ENCODE measurements at regions of chr7 and their contacts with region 1.

Region 1: GRCh38 chr7:106542550-106543220 is 118.3 kb downstream of the CCDC71L start:
- DNase-seq: peak; percentile 33
- H3K4me3 Mint-ChIP-seq: no peak overlapping the region
- H3K27ac Mint-ChIP-seq: no peak overlapping the region
- H3K4me1 Mint-ChIP-seq: peaks cover 16% of the 10 kb centered on the region
- H3K27me3 Mint-ChIP-seq: no peaks in the 10 kb centered on the region

Region 2: GRCh38 chr7:106561666-106562411 is 19.2 kb after region 1 on chr7:
- intact Hi-C with region 1: no loop called
- DNase-seq: no peak
- H3K4me3 Mint-ChIP-seq: no peak overlapping the region
- H3K27ac Mint-ChIP-seq: no peak overlapping the region
- H3K4me1 Mint-ChIP-seq: peaks cover 5% of the 10 kb centered on the region
- H3K27me3 Mint-ChIP-seq: peaks cover 9% of the 10 kb centered on the region

Region 3: DNA sequence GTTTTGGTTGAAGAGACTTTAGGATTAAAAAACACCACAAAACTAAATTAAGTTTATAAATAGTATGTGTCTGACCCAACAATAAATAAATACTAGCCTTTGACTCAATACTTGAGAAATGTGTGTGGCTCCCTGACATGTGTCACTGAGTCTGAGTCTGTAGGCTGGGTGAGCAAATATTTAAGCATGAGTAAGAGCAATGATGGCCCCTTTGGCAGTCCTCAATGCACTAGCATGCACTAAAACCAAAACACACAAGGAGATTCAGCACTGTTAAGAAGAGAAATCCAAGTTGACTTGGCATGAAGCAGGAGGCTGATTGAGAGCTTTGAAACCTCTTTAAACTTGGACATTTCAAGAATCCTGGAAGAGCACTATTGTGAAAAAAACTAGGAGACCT is 81.2 kb after region 1 on chr7:
- intact Hi-C with region 1: loop called (anchors 10 kb)
- DNase-seq: no peak
- H3K4me3 Mint-ChIP-seq: no peak overlapping the region
- H3K27ac Mint-ChIP-seq: no peak overlapping the region
- H3K4me1 Mint-ChIP-seq: peaks cover 16% of the 10 kb centered on the region
- H3K27me3 Mint-ChIP-seq: peaks cover 2% of the 10 kb centered on the region

Region 4: DNA sequence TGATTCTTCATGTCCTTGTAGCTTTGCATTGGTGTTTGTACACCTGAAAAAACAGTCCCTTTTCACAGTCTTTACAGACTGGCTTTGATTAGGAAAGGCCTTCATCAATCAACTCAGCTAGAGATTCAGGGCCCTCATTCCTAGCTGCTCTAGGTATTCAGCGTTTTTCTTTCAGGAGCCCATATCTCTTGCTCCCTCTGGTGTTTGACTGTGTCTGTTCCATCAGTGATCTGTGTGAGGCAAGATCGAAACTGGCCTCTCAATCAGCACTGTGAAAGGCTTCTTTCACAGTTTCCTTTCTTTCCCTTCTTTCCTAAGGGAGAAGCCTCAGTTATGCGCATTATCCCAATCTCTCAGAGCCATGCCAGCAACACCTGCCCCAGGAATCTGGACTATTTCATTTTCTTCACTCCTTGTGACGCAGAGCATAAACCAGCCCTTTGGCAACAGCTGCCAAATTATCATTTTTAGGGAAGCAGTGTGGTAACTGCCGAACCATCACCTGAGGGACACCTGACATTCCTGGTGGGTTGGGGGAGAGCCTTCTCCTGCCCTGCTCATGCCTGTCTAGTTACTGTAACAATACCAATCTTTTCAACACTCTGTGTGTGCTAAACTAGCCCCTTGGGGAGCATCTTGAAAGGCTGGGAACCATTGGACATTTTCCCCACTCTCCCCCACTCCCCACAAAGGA is 194.0 kb after region 1 on chr7:
- intact Hi-C with region 1: loop called (anchors 1 kb)
- DNase-seq: peak; percentile 43
- H3K4me3 Mint-ChIP-seq: no peak overlapping the region
- H3K27ac Mint-ChIP-seq: no peak overlapping the region
- H3K4me1 Mint-ChIP-seq: peaks cover 41% of the 10 kb centered on the region
- H3K27me3 Mint-ChIP-seq: no peaks in the 10 kb centered on the region

Region 5: DNA sequence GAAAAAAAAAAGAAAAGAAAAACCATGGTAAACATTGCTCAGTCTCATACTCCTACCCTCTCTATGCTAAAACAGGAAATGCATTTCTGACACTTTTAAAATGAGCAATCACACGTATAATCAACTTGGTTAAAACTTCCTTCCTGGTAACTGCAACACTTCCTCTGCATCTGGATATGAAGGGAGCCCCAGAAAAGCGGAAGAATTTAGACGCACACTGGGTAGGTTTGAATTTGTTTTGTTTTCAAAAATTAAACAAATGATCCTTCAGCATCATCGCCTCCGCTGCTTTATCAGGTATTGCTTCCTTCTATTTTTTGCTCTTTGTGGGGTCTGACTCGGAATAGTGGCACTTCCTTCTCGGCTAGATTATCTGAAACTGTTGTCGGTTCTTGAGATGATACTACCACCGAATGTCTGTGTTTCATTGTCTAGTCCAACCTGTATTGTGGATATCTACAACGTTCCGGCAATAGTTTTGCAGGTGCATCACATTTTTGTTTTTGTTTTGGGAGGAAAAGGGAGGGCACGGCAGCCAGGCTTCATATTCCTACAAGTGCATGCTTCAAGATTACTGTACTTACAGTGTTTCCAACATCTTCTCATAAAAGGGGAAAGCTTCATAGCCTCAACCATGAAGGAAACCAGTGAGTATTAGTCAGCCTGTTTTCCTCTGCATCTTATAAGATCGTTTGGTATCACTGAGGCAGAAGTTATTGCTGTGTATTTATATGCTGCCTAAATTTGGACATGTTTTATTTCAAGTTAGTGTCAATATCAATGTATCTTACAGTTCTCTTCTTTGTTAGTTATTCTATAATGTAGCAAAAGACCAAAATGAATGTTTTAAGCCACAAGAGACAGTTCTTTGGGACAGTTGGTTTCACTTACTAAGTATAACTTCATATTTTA is 322.7 kb after region 1 on chr7 and contains the start of gene PIK3CG:
- intact Hi-C with region 1: loop called (anchors 5 kb)
- DNase-seq: peak; percentile 16
- H3K4me3 Mint-ChIP-seq: peak within 1 kb of the TSS; percentile 91
- H3K27ac Mint-ChIP-seq: peak within 1 kb of the TSS; percentile 85
- H3K4me1 Mint-ChIP-seq: peaks cover 41% of the 10 kb centered on the region
- H3K27me3 Mint-ChIP-seq: no peaks in the 10 kb centered on the region
- total RNA-seq, gene PIK3CG: 36.6 and 36.7 TPM in 2 replicates